Activated CD4-positive, alpha-beta T cell treated with anti-CD3 and anti-CD28 coated beads, Interleukin-2, amount 10 ng/mL, durations not matched to agents 24 days and 14 days (primary cell): ENCODE measurements at regions of chr17 and their contacts with region 1.

Region 1: GRCh38 chr17:81860756-81861518 is 602 bp upstream of the P4HB start:
- DNase-seq: peak; percentile 100
- H3K4me3 Mint-ChIP-seq: peak overlapping the region; percentile 96
- H3K27ac Mint-ChIP-seq: peak overlapping the region; percentile 98
- H3K4me1 Mint-ChIP-seq: peaks cover 44% of the 10 kb centered on the region
- H3K27me3 Mint-ChIP-seq: no peaks in the 10 kb centered on the region

Region 2: DNA sequence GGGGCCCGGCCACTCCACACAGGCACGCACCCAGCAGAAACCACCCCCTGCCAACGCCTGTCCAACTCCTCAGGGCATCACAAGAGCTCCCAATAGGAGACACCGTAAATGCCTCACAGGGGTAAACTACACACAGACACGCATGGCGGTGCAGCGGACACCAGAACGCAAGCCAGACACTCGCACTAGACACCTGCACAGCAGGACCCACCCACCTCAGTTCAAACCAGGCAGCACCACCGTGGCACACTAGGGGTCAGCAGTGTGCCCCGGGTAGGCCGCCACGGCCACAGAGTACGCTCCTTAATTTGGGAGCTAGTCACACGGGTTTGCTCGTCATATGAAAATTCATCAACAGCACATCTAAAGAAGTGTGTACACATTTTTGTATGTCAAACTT is 569.3 kb before region 1 on chr17:
- intact Hi-C with region 1: no loop called
- DNase-seq: peak; percentile 90
- H3K4me3 Mint-ChIP-seq: peak overlapping the region; percentile 29
- H3K27ac Mint-ChIP-seq: no peak overlapping the region
- H3K4me1 Mint-ChIP-seq: peaks cover 37% of the 10 kb centered on the region
- H3K27me3 Mint-ChIP-seq: no peaks in the 10 kb centered on the region

Region 3: GRCh38 chr17:81702971-81703746 is 157.8 kb before region 1 on chr17 and contains the start of gene MRPL12:
- intact Hi-C with region 1: loop called (anchors 2 kb)
- DNase-seq: peak; percentile 97
- H3K4me3 Mint-ChIP-seq: peak within 1 kb of the TSS; percentile 97
- H3K27ac Mint-ChIP-seq: peak within 1 kb of the TSS; percentile 98
- H3K4me1 Mint-ChIP-seq: peaks cover 19% of the 10 kb centered on the region
- H3K27me3 Mint-ChIP-seq: no peaks in the 10 kb centered on the region
- total RNA-seq, gene MRPL12: 232 and 233 TPM in 2 replicates

Region 4: GRCh38 chr17:81833160-81833920 is 27.6 kb before region 1 on chr17 and contains the start of gene MCRIP1:
- intact Hi-C with region 1: loop called (anchors 1 kb)
- DNase-seq: peak; percentile 99
- H3K4me3 Mint-ChIP-seq: peak within 1 kb of the TSS; percentile 93
- H3K27ac Mint-ChIP-seq: peak within 1 kb of the TSS; percentile 94
- H3K4me1 Mint-ChIP-seq: peaks cover 19% of the 10 kb centered on the region
- H3K27me3 Mint-ChIP-seq: no peaks in the 10 kb centered on the region
- total RNA-seq, gene MCRIP1: 46.7 and 51.9 TPM in 2 replicates

Region 5: DNA sequence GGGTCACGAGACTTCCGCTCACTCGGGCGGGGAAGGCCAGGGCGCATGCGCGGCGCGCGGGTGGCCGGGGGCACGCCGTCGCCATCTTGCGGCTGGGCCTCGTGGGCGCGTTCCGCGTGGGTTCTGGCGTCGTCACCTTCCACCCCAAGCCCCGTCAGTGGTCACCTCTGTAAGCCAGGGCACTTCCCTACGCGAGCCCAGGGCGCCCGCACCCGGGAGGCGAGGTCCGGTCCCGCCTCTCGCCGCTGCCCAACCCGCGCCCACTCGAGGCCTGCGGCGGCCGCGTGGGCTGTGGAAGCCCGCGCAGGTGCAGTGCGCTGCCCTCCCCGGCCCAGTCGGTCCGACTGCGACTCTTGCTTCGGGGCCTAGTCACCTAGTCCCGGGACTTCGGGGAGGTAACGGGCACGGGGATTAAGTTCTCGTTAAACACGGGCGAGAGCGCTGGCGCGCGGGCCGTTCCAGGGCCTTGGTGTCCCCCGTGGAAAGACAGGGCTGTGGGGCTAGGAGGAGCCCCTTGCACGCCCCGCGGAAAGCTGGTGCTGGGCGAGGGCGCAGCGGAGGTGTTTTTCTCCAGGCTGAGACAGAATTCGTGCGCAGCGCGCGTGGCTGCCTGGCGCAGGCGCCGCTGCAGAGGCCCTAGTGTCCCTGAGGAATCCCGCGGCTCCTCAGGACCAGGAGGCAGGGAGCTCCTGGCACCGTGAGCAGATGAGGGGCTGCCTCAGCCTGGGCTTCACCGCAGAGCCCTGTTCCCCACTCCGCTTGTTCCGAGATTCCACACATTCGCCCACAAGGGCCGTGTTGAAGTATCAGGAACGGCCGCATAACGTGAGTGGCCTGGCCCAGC is 10.7 kb after region 1 on chr17:
- intact Hi-C with region 1: loop called (anchors 1 kb)
- DNase-seq: peak; percentile 99
- H3K4me3 Mint-ChIP-seq: peak overlapping the region; percentile 87
- H3K27ac Mint-ChIP-seq: peak overlapping the region; percentile 96
- H3K4me1 Mint-ChIP-seq: peaks cover 31% of the 10 kb centered on the region
- H3K27me3 Mint-ChIP-seq: no peaks in the 10 kb centered on the region

Region 6: GRCh38 chr17:81890447-81891299 is 29.7 kb after region 1 on chr17:
- intact Hi-C with region 1: loop called (anchors 1 kb)
- DNase-seq: peak; percentile 80
- H3K4me3 Mint-ChIP-seq: peak overlapping the region; percentile 88
- H3K27ac Mint-ChIP-seq: peak overlapping the region; percentile 94
- H3K4me1 Mint-ChIP-seq: peaks cover 17% of the 10 kb centered on the region
- H3K27me3 Mint-ChIP-seq: no peaks in the 10 kb centered on the region

Region 7: DNA sequence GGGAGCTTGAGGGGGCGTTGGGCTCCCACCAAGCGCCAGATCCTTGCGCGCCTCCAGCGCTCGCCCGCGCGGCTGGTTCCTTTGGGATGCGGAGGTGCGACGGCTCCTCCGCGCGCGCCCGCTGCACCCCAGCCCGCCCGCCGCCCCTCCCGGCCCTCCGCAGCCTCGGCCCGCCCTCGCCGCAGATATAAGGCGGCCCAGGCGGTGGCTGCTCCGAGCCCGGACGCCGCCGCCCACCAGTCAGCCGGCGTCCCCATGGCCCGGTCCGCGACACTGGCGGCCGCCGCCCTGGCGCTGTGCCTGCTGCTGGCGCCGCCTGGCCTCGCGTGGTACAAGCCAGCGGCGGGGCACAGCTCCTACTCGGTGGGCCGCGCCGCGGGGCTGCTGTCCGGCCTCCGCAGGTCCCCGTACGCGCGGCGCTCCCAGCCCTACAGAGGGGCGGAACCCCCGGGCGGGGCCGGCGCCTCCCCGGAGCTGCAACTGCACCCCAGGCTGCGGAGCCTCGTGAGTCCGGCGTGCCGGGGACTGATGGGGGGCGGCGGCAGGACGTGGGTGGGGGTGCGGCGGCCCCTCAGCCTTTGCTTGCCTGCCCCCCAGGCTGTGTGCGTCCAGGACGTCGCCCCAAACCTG is 41.2 kb after region 1 on chr17 and contains the start of gene NPB:
- intact Hi-C with region 1: no loop called
- DNase-seq: no peak
- H3K4me3 Mint-ChIP-seq: peak within 1 kb of the TSS; percentile 3
- H3K27ac Mint-ChIP-seq: no peak within 1 kb of the TSS
- H3K4me1 Mint-ChIP-seq: peaks cover 2% of the 10 kb centered on the region
- H3K27me3 Mint-ChIP-seq: peaks cover 7% of the 10 kb centered on the region
- total RNA-seq, gene NPB: 0.30 and 0.40 TPM in 2 replicates

Region 8: DNA sequence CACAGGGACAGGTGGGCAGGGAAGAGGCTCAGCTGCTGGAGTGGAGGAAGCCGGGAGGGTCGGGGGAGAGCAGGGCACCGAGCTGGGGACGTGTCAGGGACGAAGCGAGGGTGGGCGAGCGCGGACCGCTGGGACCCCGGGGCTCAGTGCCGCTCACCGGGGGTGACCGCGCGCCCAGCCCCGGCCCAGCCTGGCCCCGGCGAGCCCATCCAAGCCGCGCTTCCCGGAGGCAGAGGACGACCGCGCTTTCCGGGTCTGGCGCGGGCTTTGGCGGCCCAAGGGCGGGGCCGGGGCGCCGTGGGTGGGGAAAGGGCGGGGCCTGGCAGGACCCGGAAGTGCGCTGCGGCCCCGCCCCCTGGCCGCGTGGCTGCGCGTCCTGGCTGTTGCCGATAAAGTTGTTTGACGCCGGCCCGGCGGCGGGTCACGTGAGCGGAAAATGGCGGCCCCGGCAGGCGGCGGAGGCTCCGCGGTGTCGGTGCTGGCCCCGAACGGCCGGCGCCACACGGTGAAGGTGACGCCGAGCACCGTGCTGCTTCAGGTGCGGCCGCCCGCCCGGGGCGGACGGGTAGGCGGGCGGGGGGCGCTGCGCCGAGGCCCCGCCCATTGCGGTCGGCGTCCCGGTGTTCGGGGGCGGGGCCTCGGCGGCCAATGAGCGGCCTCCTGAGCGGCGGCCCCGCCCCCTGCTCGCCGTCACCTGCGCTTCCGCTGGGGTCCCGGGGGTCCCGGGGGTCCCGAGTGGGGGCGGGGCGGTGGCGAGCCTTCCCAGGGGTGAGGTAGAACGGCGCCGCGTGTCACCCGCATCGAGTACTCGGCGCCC is 116.5 kb after region 1 on chr17 and contains the start of gene ASPSCR1:
- intact Hi-C with region 1: loop called (anchors 5 kb)
- DNase-seq: peak; percentile 97
- H3K4me3 Mint-ChIP-seq: peak within 1 kb of the TSS; percentile 92
- H3K27ac Mint-ChIP-seq: peak within 1 kb of the TSS; percentile 98
- H3K4me1 Mint-ChIP-seq: peaks cover 33% of the 10 kb centered on the region
- H3K27me3 Mint-ChIP-seq: peaks cover 2% of the 10 kb centered on the region
- total RNA-seq, gene ASPSCR1: 35.1 and 37.3 TPM in 2 replicates

Region 9: DNA sequence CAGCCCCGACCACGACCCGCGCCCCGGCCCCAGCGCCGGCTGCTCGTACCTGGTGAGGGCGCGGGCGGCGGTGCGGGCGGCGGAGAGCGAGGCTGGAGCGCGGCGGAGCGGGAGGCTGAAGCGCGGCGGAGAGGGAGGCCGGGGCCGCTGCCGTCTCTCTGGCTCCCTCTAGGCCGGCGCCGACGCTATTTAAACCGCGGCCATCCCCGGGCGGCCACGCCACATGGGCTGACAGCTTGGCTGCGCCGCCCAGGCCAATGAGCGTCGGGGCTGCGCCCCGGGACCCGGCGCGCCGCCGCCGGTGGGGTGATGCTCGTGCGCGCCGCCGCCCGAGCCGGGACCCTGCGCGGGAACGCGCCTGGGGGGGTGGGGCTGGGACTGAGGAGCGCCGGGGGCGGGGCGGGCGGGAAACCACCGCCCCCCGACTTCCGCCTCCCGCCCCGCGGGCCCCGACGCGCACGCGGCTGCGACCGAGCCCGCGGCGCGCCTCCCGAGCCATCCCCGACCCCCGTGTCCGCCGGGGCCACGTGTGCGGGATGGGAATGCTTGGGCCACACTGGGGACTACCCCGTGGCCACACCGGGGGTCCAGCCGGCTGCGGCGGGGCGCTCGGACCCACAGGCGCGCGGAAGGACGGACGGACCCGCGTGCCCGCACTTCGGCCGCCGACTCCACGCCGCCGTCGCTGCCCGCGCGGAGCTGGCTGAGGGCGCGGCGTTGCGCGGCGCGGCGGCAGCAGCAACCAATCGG is 237.3 kb after region 1 on chr17 and contains the start of gene FASN:
- intact Hi-C with region 1: loop called (anchors 1 kb)
- DNase-seq: peak; percentile 97
- H3K4me3 Mint-ChIP-seq: peak within 1 kb of the TSS; percentile 80
- H3K27ac Mint-ChIP-seq: peak within 1 kb of the TSS; percentile 74
- H3K4me1 Mint-ChIP-seq: peaks cover 12% of the 10 kb centered on the region
- H3K27me3 Mint-ChIP-seq: no peaks in the 10 kb centered on the region
- total RNA-seq, gene FASN: 428 and 452 TPM in 2 replicates